ENCODE measurements at regions of chr1 and their contacts with region 1.

Region 1: GRCh38 chr1:85330711-85331290 is 54.4 kb upstream of the BCL10 start:
- DNase-seq: peak; percentile 95
- H3K4me3 ChIP-seq: no peak overlapping the region
- H3K27ac ChIP-seq: peak overlapping the region; percentile 98
- H3K4me1 ChIP-seq: peaks cover 89% of the 10 kb centered on the region
- H3K27me3 ChIP-seq: no peaks in the 10 kb centered on the region
- CTCF ChIP-seq: no peak
- POLR2A ChIP-seq: peak; percentile 68

Region 2: GRCh38 chr1:84573967-84574842 is 756.6 kb before region 1 on chr1 and contains the start of gene CTBS:
- CTCF ChIA-PET with region 1: no interaction called
- POLR2A ChIA-PET with region 1: no interaction called
- dilution Hi-C with region 1: no loop called
- intact Hi-C with region 1: loop called (anchors 5 kb)
- DNase-seq: peak; percentile 85
- H3K4me3 ChIP-seq: peak within 1 kb of the TSS; percentile 40 to 69 (median 62)
- H3K27ac ChIP-seq: peak within 1 kb of the TSS; percentile 98
- H3K4me1 ChIP-seq: peaks cover 17% of the 10 kb centered on the region
- H3K27me3 ChIP-seq: no peaks in the 10 kb centered on the region
- CTCF ChIP-seq: no peak
- POLR2A ChIP-seq: peak; percentile 86
- total RNA-seq, gene CTBS: 10.7 and 14.3 TPM in 2 replicates

Region 3: GRCh38 chr1:85093644-85094043 is 237.2 kb before region 1 on chr1:
- CTCF ChIA-PET with region 1: no interaction called
- POLR2A ChIA-PET with region 1: no interaction called
- dilution Hi-C with region 1: no loop called
- intact Hi-C with region 1: no loop called
- DNase-seq: no peak
- H3K4me3 ChIP-seq: no peak overlapping the region
- H3K27ac ChIP-seq: no peak overlapping the region
- H3K4me1 ChIP-seq: no peaks in the 10 kb centered on the region
- H3K27me3 ChIP-seq: peaks cover 10 to 48% of the 10 kb centered on the region in 2 experiments
- CTCF ChIP-seq: no peak
- POLR2A ChIP-seq: no peak

Region 4: GRCh38 chr1:85297855-85298629 is 32.8 kb before region 1 on chr1:
- CTCF ChIA-PET with region 1: no interaction called
- POLR2A ChIA-PET with region 1: interaction called, 3 read pairs
- dilution Hi-C with region 1: no loop called
- intact Hi-C with region 1: loop called (anchors 1 kb)
- DNase-seq: peak; percentile 100
- H3K4me3 ChIP-seq: no peak overlapping the region
- H3K27ac ChIP-seq: peak overlapping the region; percentile 95
- H3K4me1 ChIP-seq: peaks cover 43% of the 10 kb centered on the region
- H3K27me3 ChIP-seq: no peaks in the 10 kb centered on the region
- CTCF ChIP-seq: no peak
- POLR2A ChIP-seq: peak; percentile 55

Region 5: GRCh38 chr1:85360730-85361493 is 30.1 kb after region 1 on chr1:
- CTCF ChIA-PET with region 1: interaction called, 5 read pairs
- POLR2A ChIA-PET with region 1: no interaction called
- dilution Hi-C with region 1: no loop called
- intact Hi-C with region 1: loop called (anchors 1 kb)
- DNase-seq: peak; percentile 28
- H3K4me3 ChIP-seq: no peak overlapping the region
- H3K27ac ChIP-seq: peak overlapping the region; percentile 74
- H3K4me1 ChIP-seq: peaks cover 26% of the 10 kb centered on the region
- H3K27me3 ChIP-seq: no peaks in the 10 kb centered on the region
- CTCF ChIP-seq: no peak
- POLR2A ChIP-seq: no peak

Region 6: GRCh38 chr1:85448358-85448757 is 117.6 kb after region 1 on chr1:
- CTCF ChIA-PET with region 1: no interaction called
- POLR2A ChIA-PET with region 1: no interaction called
- dilution Hi-C with region 1: no loop called
- intact Hi-C with region 1: loop called (anchors 1 kb)
- DNase-seq: peak; percentile 91
- H3K4me3 ChIP-seq: no peak overlapping the region
- H3K27ac ChIP-seq: peak overlapping the region; percentile 98
- H3K4me1 ChIP-seq: peaks cover 34% of the 10 kb centered on the region
- H3K27me3 ChIP-seq: no peaks in the 10 kb centered on the region
- CTCF ChIP-seq: no peak
- POLR2A ChIP-seq: no peak

Region 7: DNA sequence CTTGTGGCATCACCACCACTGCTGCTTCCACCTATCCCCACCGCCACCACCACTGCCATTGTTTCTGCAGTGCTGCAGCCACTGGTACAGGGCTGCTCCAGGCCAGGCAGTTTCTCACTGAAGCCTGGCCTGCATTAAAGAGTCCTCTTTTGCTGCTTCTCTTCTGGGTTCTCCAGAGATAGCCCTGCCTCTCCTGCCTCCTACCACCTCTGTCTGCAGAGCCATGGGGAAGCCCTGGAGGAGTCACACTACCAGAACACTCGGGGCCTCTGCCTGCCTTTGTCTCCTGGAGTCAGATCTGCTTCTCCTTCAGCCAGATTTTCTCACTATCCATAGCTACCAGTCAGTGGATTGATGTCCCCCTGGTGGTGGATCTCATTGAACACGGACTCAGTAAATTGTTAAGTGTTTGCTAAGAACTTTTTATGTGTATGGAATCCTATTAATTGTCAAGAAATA is 171.9 kb after region 1 on chr1:
- CTCF ChIA-PET with region 1: interaction called, 11 read pairs
- POLR2A ChIA-PET with region 1: no interaction called
- dilution Hi-C with region 1: no loop called
- intact Hi-C with region 1: no loop called
- DNase-seq: peak; percentile 87
- H3K4me3 ChIP-seq: no peak overlapping the region
- H3K27ac ChIP-seq: no peak overlapping the region
- H3K4me1 ChIP-seq: no peaks in the 10 kb centered on the region
- H3K27me3 ChIP-seq: no peaks in the 10 kb centered on the region
- CTCF ChIP-seq: peak; percentile 46 to 58
- POLR2A ChIP-seq: no peak

Region 8: DNA sequence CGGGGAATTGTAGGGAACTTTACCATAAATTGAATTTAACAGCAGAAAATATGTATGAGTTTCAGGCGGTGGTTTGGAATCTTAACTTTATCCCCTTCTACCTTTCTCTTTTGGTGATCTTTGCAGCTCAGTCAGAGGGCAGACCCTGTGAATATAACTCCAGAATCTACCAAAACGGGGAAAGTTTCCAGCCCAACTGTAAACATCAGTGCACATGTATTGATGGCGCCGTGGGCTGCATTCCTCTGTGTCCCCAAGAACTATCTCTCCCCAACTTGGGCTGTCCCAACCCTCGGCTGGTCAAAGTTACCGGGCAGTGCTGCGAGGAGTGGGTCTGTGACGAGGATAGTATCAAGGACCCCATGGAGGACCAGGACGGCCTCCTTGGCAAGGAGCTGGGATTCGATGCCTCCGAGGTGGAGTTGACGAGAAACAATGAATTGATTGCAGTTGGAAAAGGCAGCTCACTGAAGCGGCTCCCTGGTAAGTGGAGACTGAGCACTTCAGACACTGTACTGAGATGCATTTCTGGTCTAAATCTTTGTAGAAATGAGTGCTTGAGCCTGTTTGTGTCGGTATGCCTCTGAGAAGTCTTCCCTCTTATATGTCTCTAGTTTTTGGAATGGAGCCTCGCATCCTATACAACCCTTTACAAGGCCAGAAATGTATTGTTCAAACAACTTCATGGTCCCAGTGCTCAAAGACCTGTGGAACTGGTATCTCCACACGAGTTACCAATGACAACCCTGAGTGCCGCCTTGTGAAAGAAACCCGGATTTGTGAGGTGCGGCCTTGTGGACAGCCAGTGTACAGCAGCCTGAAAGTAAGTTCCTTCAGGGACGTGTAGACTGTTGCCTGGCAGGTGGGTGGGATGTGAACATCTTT is 251.2 kb after region 1 on chr1:
- CTCF ChIA-PET with region 1: interaction called, 4 read pairs
- POLR2A ChIA-PET with region 1: interaction called, 47 read pairs
- dilution Hi-C with region 1: no loop called
- intact Hi-C with region 1: loop called (anchors 1 kb)
- DNase-seq: peak; percentile 54
- H3K4me3 ChIP-seq: peak overlapping the region; percentile 57 to 98 (median 78)
- H3K27ac ChIP-seq: peak overlapping the region; percentile 92
- H3K4me1 ChIP-seq: peaks cover 16% of the 10 kb centered on the region
- H3K27me3 ChIP-seq: no peaks in the 10 kb centered on the region
- CTCF ChIP-seq: peak in 1 of 2 donors; percentile 7
- POLR2A ChIP-seq: peak; percentile 45